HepG2 (cell line): ENCODE measurements at regions of chr17 and their contacts with region 1.

Region 1: DNA sequence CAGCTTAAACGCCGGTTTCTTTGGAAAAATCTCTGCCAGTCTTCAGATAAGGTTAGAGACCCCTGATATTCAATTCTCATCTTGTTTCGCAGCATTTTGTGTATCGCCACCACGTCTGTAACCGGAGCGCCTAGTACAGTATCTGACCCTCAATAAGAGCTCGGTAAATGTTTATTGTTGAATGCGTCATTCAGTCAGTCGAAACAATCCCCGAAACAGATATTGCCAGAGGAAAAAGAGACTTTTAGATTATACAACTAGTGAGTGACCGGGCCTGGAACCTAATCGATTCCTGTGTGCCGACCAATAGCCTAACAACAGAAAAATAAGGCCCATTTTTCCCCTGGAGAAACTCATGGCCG is 626 bp downstream of the PELP1 start:
- DNase-seq: no peak
- ATAC-seq: no peak
- H3K4me3 ChIP-seq: peak overlapping the region; percentile 95 to 99 (median 95)
- H3K27ac ChIP-seq: peak overlapping the region; percentile 79
- H3K4me1 ChIP-seq: peaks cover 52% of the 10 kb centered on the region
- H3K27me3 ChIP-seq: no peaks in the 10 kb centered on the region; a peak in 1 of 5 replicates
- CTCF ChIP-seq: no peak
- EP300 ChIP-seq: no peak
- POLR2A ChIP-seq: no peak
- RAD21 ChIP-seq: no peak

Region 2: DNA sequence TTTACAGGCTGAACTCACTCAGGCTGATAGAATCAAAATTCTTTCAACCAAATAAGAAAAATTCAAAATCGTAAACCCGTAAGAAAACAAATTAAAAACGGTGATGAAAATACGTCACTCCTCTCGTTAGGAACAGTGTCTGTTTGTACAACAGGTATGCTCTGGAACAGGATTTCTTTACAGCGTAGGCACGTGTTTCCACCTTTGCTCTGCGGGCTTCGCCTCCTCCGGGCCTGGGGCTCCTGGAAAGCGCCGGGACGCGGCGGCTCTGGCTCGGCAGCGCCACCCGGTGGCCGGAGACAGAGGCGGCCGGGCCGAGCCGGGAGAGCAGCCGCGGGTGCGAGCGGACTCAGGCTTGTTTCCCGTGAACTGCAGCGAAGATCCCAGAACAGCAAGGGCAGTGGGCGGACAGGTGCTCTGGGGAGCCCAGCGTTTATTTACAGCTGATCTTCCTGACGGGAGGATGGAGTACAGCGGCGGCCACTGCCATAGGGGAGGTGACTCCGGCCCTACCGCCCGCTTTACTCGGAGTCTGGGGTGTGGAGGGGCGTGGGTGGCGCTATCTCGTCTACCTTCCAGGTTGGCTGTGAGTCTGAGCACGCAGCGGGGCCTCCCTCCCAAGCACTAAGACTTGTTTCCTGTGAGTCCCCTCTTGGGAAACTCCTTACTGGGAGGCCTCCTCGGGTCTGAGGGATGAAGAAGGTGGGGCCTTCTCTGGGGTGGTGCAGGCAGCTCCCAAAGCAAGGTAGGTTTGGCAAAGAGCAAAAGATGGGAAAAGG is 698.6 kb before region 1 on chr17:
- CTCF ChIA-PET with region 1: no interaction called
- POLR2A ChIA-PET with region 1: no interaction called
- in situ Hi-C with region 1: no loop called
- intact Hi-C with region 1: no loop called
- DNase-seq: peak; percentile 63
- ATAC-seq: peak; percentile 78
- H3K4me3 ChIP-seq: peak overlapping the region in 2 of 3 experiments; percentile 33 to 63; a peak in 3 of 6 replicates
- H3K27ac ChIP-seq: peak overlapping the region; percentile 68
- H3K4me1 ChIP-seq: peaks cover 32% of the 10 kb centered on the region
- H3K27me3 ChIP-seq: no peaks in the 10 kb centered on the region
- CTCF ChIP-seq: peak; percentile 91
- EP300 ChIP-seq: no peak
- POLR2A ChIP-seq: 0 out of 4 replicates have a peak, but pooled peaks of 1 of the 2 experiments have one; percentile 43
- RAD21 ChIP-seq: peak; percentile 97

Region 3: GRCh38 chr17:4721203-4722135 is 18.2 kb after region 1 on chr17:
- CTCF ChIA-PET with region 1: no interaction called
- POLR2A ChIA-PET with region 1: interaction called, 87 read pairs
- in situ Hi-C with region 1: no loop called
- intact Hi-C with region 1: no loop called
- DNase-seq: peak; percentile 95
- ATAC-seq: peak; percentile 90
- H3K4me3 ChIP-seq: peak overlapping the region in 1 of 3 experiments; percentile 58; a peak in 3 of 6 replicates
- H3K27ac ChIP-seq: peak overlapping the region; percentile 68
- H3K4me1 ChIP-seq: peaks cover 35% of the 10 kb centered on the region
- H3K27me3 ChIP-seq: no peaks in the 10 kb centered on the region
- CTCF ChIP-seq: no peak
- EP300 ChIP-seq: peak in 1 of 2 experiments; percentile 85; a peak in 2 of 4 replicates
- POLR2A ChIP-seq: peak; percentile 50 to 69; a peak in 3 of 4 replicates
- RAD21 ChIP-seq: 0 out of 2 replicates have a peak, but pooled peaks have one; percentile 12